CD4-positive, alpha-beta memory T cell (primary cell): ENCODE measurements at regions of chr17 and their contacts with region 1.

Region 1: DNA sequence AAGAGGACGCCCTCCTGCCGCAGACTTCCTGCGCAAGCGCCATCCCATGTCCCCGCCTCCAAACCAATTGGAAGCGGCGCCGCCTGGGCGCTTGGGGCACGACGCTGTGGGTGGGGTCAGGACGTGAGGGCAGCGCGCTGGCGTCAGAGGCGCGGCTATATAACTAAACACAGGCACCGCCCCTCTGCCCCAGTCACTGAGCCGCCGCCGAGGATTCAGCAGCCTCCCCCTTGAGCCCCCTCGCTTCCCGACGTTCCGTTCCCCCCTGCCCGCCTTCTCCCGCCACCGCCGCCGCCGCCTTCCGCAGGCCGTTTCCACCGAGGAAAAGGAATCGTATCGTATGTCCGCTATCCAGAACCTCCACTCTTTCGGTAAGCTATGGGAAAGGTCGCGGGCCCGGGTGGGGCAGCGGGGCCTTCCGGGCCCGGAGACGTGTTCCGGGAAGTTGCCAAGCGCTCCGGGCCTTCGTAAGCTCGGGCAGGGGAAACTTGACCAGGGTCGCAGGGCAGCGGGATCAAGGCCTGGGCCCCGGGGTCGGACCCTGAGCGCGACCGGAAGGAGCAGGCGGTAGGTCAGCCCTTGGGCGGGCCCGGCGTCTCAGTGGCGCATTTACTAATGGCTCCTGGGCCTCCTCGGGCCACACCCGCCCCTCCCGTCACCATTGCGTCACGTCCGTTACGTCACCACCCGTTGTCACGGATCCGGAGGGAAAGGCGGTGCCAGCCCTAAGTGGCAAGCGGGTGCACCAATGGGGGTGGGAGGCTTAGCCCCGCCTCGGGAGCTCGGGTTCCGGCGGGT is at the start of gene EIF1:
- DNase-seq: peak; percentile 99 to 100 (median 99)
- H3K4me3 ChIP-seq: peak within 1 kb of the TSS; percentile 89 to 95
- H3K4me3 Mint-ChIP-seq: peak within 1 kb of the TSS; percentile 95 to 98 (median 96)
- H3K27ac ChIP-seq: peak within 1 kb of the TSS; percentile 99
- H3K27ac Mint-ChIP-seq: peak within 1 kb of the TSS; percentile 99 to 100 (median 100)
- H3K4me1 ChIP-seq: peaks cover 36% of the 10 kb centered on the region
- H3K4me1 Mint-ChIP-seq: peaks cover 19 to 60% (median 31%) of the 10 kb centered on the region in 4 donors
- H3K27me3 ChIP-seq: no peaks in the 10 kb centered on the region
- H3K27me3 Mint-ChIP-seq: no peaks in the 10 kb centered on the region
- total RNA-seq, gene EIF1: 776 to 839 TPM

Region 2: GRCh38 chr17:40219073-40219860 is 1469.6 kb before region 1 on chr17 and contains the start of gene WIPF2:
- CTCF ChIA-PET with region 1: interaction called, 3 read pairs
- POLR2A ChIA-PET with region 1: interaction called, 8 read pairs
- intact Hi-C with region 1: loop called (anchors 2 kb)
- DNase-seq: peak; percentile 94 to 97 (median 95)
- H3K4me3 ChIP-seq: peak within 1 kb of the TSS; percentile 59 to 71
- H3K4me3 Mint-ChIP-seq: peak within 1 kb of the TSS; percentile 92 to 100 (median 98)
- H3K27ac ChIP-seq: peak within 1 kb of the TSS; percentile 96
- H3K27ac Mint-ChIP-seq: peak within 1 kb of the TSS; percentile 93 to 100 (median 100)
- H3K4me1 ChIP-seq: peaks cover 26% of the 10 kb centered on the region
- H3K4me1 Mint-ChIP-seq: peaks cover 23 to 49% (median 33%) of the 10 kb centered on the region in 4 donors
- H3K27me3 ChIP-seq: no peaks in the 10 kb centered on the region
- H3K27me3 Mint-ChIP-seq: no peaks in the 10 kb centered on the region
- total RNA-seq, gene WIPF2: 34.4 to 34.7 TPM

Region 3: DNA sequence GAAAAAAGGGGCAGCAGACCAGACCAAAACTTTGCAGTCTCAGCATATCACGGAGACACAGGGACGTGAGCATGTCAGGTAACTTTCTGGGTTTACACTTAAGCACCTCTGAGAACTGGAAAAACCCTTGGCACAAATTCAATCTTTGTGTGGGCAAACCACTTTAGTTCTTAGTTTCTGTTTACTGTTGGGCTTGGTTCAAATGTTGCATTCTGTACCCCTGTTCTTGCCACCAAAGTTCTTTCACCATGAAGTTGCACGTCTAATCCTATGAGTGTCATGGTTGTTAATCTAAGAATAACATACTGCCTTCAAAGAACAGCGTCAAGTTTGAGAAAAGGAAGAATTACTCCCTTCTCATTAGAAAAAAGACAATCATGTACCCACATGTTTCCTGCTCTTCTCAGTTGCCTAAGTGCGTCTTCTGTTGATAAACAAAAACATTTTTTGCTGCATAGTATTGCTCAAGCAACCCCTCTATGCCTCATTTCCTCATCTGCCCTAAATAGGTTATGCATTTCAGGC is 349.9 kb before region 1 on chr17:
- CTCF ChIA-PET with region 1: no interaction called
- POLR2A ChIA-PET with region 1: interaction called, 22 read pairs
- intact Hi-C with region 1: no loop called
- DNase-seq: peak; percentile 87 to 94 (median 91)
- H3K4me3 ChIP-seq: no peak overlapping the region
- H3K4me3 Mint-ChIP-seq: peak overlapping the region; percentile 49 to 80 (median 69)
- H3K27ac ChIP-seq: peak overlapping the region; percentile 72
- H3K27ac Mint-ChIP-seq: peak overlapping the region; percentile 95 to 100 (median 99)
- H3K4me1 ChIP-seq: peaks cover 100% of the 10 kb centered on the region
- H3K4me1 Mint-ChIP-seq: peaks cover 71 to 97% (median 86%) of the 10 kb centered on the region in 4 donors
- H3K27me3 ChIP-seq: no peaks in the 10 kb centered on the region
- H3K27me3 Mint-ChIP-seq: no peaks in the 10 kb centered on the region

Region 4: GRCh38 chr17:41665566-41666236 is 23.2 kb before region 1 on chr17:
- CTCF ChIA-PET with region 1: interaction called, 116 read pairs
- POLR2A ChIA-PET with region 1: interaction called, 285 read pairs
- intact Hi-C with region 1: loop called (anchors 1 kb)
- DNase-seq: peak; percentile 84 to 92 (median 88)
- H3K4me3 ChIP-seq: peak overlapping the region; percentile 69 to 71
- H3K4me3 Mint-ChIP-seq: peak overlapping the region; percentile 82 to 97 (median 92)
- H3K27ac ChIP-seq: peak overlapping the region; percentile 96
- H3K27ac Mint-ChIP-seq: peak overlapping the region; percentile 94 to 100 (median 98)
- H3K4me1 ChIP-seq: peaks cover 22% of the 10 kb centered on the region
- H3K4me1 Mint-ChIP-seq: peaks cover 13 to 35% (median 21%) of the 10 kb centered on the region in 4 donors
- H3K27me3 ChIP-seq: no peaks in the 10 kb centered on the region
- H3K27me3 Mint-ChIP-seq: peaks cover 0 to under 1% of the 10 kb centered on the region in 2 donors

Region 5: DNA sequence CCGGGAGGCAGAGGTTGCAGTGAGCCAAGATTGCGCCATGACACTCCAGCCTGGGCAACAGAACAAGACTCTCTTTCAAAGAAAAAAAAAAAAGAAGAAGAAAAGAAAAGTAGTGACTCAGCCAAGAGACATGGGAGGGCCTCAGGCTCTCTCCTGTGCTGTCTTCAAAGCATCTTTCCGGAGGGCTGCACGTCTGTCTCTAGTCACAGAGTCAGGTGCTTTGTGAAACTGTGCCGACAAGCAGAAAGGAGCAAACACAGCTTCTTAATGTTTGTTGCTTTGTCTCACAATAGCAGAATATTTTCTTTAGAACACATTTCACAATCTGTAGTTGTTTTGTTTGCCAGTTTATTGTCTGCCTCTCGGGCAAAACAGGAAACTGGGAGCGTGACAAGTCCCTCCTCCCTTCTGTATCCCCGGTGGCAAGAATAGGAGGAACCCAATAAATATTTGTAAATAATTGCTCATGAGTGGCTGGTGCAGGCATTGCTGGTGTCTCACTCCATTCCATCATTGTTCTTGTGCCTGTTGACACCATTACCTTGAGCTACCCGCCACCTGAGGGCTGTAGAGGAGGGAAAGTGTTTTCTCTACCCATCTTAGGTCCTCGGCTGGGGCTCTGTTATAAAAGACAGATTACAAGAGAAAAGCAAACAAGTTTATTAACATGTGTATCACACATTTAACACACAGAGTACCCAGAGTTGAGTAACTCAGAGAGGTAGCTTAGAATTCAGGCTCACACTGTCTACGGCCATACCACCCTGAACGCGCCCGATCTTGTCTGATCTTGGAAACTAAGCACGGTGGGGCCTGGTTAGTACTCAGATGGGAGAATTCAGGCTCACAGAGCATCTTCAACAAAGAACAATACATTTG is 28.7 kb after region 1 on chr17:
- CTCF ChIA-PET with region 1: interaction called, 3 read pairs
- POLR2A ChIA-PET with region 1: interaction called, 11 read pairs
- intact Hi-C with region 1: no loop called
- DNase-seq: peak in 2 of 5 donors; percentile 12 to 25
- H3K4me3 ChIP-seq: no peak overlapping the region
- H3K4me3 Mint-ChIP-seq: peak overlapping the region in 1 of 8 donors; percentile 43
- H3K27ac ChIP-seq: no peak overlapping the region
- H3K27ac Mint-ChIP-seq: peak overlapping the region in 2 of 7 donors; percentile 70 to 73
- H3K4me1 ChIP-seq: peaks cover 12% of the 10 kb centered on the region
- H3K4me1 Mint-ChIP-seq: peaks cover 3 to 7% (median 6%) of the 10 kb centered on the region in 4 donors
- H3K27me3 ChIP-seq: no peaks in the 10 kb centered on the region
- H3K27me3 Mint-ChIP-seq: peaks cover 0 to 3% of the 10 kb centered on the region in 2 donors

Region 6: DNA sequence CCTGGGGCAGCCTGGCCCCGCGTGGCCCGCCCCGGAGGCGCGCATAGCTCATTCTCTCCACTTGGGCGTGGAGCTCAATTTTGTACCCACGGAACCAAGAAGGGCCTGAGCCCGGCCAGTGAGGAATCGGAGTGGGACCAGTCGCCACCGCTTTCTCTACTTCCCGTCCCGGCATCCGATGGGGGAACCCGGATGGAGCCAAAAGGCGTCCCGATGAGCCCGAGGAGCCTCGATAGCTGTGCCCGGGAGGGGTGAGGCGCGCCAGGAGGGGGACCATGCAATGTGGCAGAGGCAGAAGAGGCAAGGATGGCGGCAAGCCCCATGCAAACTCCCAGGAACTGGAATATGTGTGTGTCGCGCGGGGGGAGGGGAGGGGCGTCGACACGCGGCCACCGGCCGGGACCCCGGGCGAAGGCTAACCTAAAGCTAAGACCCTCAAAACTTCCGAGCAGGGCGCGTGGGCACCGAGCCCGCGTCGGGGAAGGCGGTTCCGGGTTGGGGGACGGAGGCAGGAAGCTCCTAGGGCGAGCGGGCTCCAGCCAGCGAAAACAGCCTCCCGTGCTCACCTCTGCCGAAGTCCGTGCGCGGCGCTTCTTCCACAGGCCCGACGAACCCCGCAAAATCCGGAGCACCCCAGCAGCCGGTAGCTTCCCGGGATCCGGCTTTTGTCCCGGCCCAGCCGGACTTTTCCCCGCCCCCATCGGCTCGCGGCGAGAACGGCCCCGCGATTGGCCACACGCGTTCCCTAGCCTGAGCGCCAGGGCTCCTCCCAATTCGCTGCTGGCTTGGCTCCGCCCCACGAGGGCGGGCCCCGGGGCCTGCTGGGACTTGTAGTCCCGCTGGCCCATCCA is 229.6 kb after region 1 on chr17 and contains the start of gene ACLY:
- CTCF ChIA-PET with region 1: no interaction called
- POLR2A ChIA-PET with region 1: interaction called, 11 read pairs
- intact Hi-C with region 1: no loop called
- DNase-seq: peak; percentile 93 to 94 (median 93)
- H3K4me3 ChIP-seq: peak within 1 kb of the TSS; percentile 78 to 97
- H3K4me3 Mint-ChIP-seq: peak within 1 kb of the TSS; percentile 87 to 96 (median 90)
- H3K27ac ChIP-seq: peak within 1 kb of the TSS; percentile 88
- H3K27ac Mint-ChIP-seq: peak within 1 kb of the TSS; percentile 76 to 93 (median 87)
- H3K4me1 ChIP-seq: peaks cover 48% of the 10 kb centered on the region
- H3K4me1 Mint-ChIP-seq: peaks cover 23 to 46% (median 33%) of the 10 kb centered on the region in 4 donors
- H3K27me3 ChIP-seq: no peaks in the 10 kb centered on the region
- H3K27me3 Mint-ChIP-seq: no peaks in the 10 kb centered on the region
- total RNA-seq, gene ACLY: 84.4 to 88.5 TPM